H1 (cell line): ENCODE measurements at regions of chr1 and their contacts with region 1.

Region 1: DNA sequence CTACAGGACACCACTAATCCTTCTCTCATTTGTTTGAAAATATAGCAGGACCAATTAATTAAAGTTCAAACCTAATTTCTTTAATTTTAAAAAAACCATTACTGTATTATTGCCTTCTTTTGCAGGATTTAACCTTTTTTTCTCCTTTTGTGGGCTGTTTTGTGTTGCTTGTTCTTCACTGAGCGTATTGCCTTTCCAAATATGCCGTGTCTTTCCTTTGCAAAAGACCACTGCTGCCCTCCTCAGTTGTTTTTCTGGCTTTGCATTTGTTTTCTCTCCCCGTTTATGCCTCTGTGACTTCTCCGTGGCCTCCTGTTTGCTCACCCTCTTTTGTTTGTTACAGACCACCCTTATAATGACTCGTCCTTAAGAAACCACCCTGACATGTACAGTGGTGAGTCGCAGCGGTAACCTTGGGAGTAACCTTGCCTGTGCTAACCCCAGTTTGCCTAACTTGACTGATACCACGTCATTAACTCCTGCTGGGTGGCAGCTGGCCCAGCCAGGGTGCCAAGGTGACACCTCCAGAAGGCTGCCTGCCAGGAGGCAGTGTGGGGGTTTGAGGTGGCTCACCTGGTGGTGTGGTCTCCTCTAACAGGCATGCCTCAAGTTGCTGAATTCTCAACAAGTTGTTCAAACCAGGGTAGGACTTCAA is 81.1 kb upstream of the CNTN2 start:
- DNase-seq: no peak
- H3K4me3 ChIP-seq: no peak overlapping the region
- H3K27ac ChIP-seq: no peak overlapping the region
- H3K4me1 ChIP-seq: peaks cover 0 to 4% (median 2%) of the 10 kb centered on the region in 4 experiments; a peak in 4 of 7 replicates
- H3K27me3 ChIP-seq: no peaks in the 10 kb centered on the region
- CTCF ChIP-seq: peak in 2 of 3 experiments; percentile 40 to 47; a peak in 3 of 4 replicates
- EP300 ChIP-seq: no peak
- POLR2A ChIP-seq: no peak
- RAD21 ChIP-seq: peak; percentile 65 to 73

Region 2: DNA sequence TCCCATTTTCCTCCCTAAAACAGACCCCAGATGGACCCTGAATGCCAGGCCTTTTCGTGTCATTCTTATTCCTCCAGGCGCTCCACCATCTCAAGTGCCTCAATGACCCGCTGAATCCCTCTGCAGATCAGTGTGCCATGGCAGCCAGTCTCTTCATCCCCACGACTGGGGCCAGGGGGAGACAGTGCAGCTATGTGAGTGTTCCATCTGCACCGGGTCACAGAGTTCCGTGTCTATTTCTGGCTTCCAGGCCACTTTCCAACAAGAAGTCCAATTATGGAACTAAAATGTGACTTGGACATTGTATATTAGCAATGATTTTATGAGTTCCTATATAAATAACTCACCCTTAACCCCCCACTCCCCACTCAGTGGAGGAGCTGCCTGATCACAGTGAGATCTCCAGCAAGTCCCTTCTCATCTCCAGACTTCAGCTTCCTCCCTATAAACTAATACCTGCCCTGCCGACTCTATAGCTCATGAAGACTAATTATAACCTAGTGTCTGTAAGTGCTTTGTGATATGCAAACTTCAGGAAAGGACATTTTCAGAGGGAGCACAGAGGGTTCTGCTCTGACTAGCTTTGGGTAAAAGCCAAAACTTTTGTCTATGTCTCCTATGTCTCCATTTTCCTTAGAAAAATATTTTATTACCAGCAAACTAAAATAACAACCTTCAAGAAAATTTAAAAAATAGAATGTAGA is 147.6 kb before region 1 on chr1:
- CTCF ChIA-PET with region 1: interaction called, 15 read pairs
- POLR2A ChIA-PET with region 1: no interaction called
- DNase-seq: no peak
- H3K4me3 ChIP-seq: no peak overlapping the region
- H3K27ac ChIP-seq: no peak overlapping the region
- H3K4me1 ChIP-seq: no peaks in the 10 kb centered on the region
- H3K27me3 ChIP-seq: no peaks in the 10 kb centered on the region
- CTCF ChIP-seq: no peak
- EP300 ChIP-seq: no peak
- POLR2A ChIP-seq: no peak
- RAD21 ChIP-seq: no peak

Region 3: GRCh38 chr1:204828338-204828850 is 133.5 kb before region 1 on chr1:
- CTCF ChIA-PET with region 1: interaction called, 14 read pairs
- POLR2A ChIA-PET with region 1: no interaction called
- DNase-seq: peak; percentile 43 to 93
- H3K4me3 ChIP-seq: peak overlapping the region; percentile 47 to 66 (median 55)
- H3K27ac ChIP-seq: no peak overlapping the region
- H3K4me1 ChIP-seq: peaks cover 3 to 10% (median 8%) of the 10 kb centered on the region in 4 experiments; a peak in 6 of 7 replicates
- H3K27me3 ChIP-seq: peaks cover 0 to 8% (median 3%) of the 10 kb centered on the region in 4 experiments; a peak in 4 of 7 replicates
- CTCF ChIP-seq: peak in 2 of 3 experiments; percentile 19 to 35; a peak in 3 of 4 replicates
- EP300 ChIP-seq: no peak
- POLR2A ChIP-seq: no peak
- RAD21 ChIP-seq: peak in 1 of 2 experiments; percentile 32; a peak in 1 of 4 replicates

Region 4: GRCh38 chr1:204909109-204909508 is 52.8 kb before region 1 on chr1:
- CTCF ChIA-PET with region 1: no interaction called
- POLR2A ChIA-PET with region 1: no interaction called
- DNase-seq: no peak
- H3K4me3 ChIP-seq: no peak overlapping the region
- H3K27ac ChIP-seq: no peak overlapping the region
- H3K4me1 ChIP-seq: no peaks in the 10 kb centered on the region
- H3K27me3 ChIP-seq: no peaks in the 10 kb centered on the region
- CTCF ChIP-seq: no peak
- EP300 ChIP-seq: no peak
- POLR2A ChIP-seq: no peak
- RAD21 ChIP-seq: no peak